ENCODE measurements at regions of chr16 and their contacts with region 1.

Region 1: GRCh38 chr16:19086322-19087199 is 19.1 kb downstream of the COQ7 start:
- DNase-seq: peak; percentile 91 to 97
- ATAC-seq: peak; percentile 98 to 100
- H3K4me3 ChIP-seq: peak overlapping the region; percentile 45
- H3K27ac ChIP-seq: peak overlapping the region; percentile 75 to 86
- H3K4me1 ChIP-seq: peaks cover 6% of the 10 kb centered on the region; the same call in 2 of the 3 replicates
- CTCF ChIP-seq: peak; percentile 99
- EP300 ChIP-seq: no peak
- POLR2A ChIP-seq: peak; percentile 71
- RAD21 ChIP-seq: peak; percentile 98 to 100

Region 2: GRCh38 chr16:19046062-19046461 is 40.5 kb before region 1 on chr16:
- CTCF ChIA-PET with region 1: no interaction called
- POLR2A ChIA-PET with region 1: no interaction called
- DNase-seq: no peak
- ATAC-seq: no peak
- H3K4me3 ChIP-seq: no peak overlapping the region
- H3K27ac ChIP-seq: no peak overlapping the region
- H3K4me1 ChIP-seq: no peaks in the 10 kb centered on the region
- CTCF ChIP-seq: no peak
- EP300 ChIP-seq: no peak
- POLR2A ChIP-seq: no peak
- RAD21 ChIP-seq: no peak

Region 3: GRCh38 chr16:19067349-19068236 is 19.0 kb before region 1 on chr16 and contains the start of gene COQ7:
- CTCF ChIA-PET with region 1: interaction called, 33 read pairs
- POLR2A ChIA-PET with region 1: no interaction called
- DNase-seq: peak; percentile 95 to 100
- ATAC-seq: peak; percentile 93
- H3K4me3 ChIP-seq: peak within 1 kb of the TSS; percentile 63
- H3K27ac ChIP-seq: peak within 1 kb of the TSS; percentile 95 to 99
- H3K4me1 ChIP-seq: peaks cover 12% of the 10 kb centered on the region; the same call in 2 of the 3 replicates
- CTCF ChIP-seq: no peak
- EP300 ChIP-seq: no peak
- POLR2A ChIP-seq: peak; percentile 17; the same call in 1 of the 2 replicates
- RAD21 ChIP-seq: no peak
- polyA plus RNA-seq, gene COQ7: 17.9 and 23.8 TPM in 2 replicates

Region 4: GRCh38 chr16:19118938-19119431 is 32.4 kb after region 1 on chr16:
- CTCF ChIA-PET with region 1: interaction called, 114 read pairs
- POLR2A ChIA-PET with region 1: interaction called, 11 read pairs
- DNase-seq: peak; percentile 71 to 82
- ATAC-seq: peak in 1 of 2 experiments; percentile 45; a peak in 3 of 6 replicates
- H3K4me3 ChIP-seq: peak overlapping the region; percentile 24
- H3K27ac ChIP-seq: peak overlapping the region; percentile 90
- H3K4me1 ChIP-seq: peaks cover 91% of the 10 kb centered on the region
- CTCF ChIP-seq: no peak
- EP300 ChIP-seq: no peak
- POLR2A ChIP-seq: no peak
- RAD21 ChIP-seq: 0 out of 5 replicates have a peak, but pooled peaks of 1 of the 2 experiments have one; percentile 4

Region 5: DNA sequence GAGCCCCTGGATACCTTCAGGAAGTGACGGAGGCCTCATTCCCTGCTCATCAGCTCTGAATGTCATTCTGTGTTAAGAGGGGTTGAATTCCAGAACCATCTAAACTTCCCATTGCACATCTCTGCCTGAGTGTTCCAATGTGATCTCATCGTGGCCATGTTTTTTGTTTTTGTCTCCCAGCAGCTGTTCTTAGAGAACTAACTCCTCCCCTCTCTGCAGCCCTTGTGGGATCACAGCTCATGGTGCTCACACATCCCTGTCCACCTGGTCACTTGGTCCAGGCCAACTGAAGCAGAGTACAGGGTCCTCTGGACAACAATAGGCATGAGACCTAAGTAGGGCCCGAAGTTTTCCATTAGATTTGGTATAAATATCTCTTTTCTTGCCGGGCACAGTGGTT is 75.5 kb after region 1 on chr16:
- CTCF ChIA-PET with region 1: interaction called, 23 read pairs
- POLR2A ChIA-PET with region 1: no interaction called
- DNase-seq: peak in 1 of 2 experiments; percentile 16
- ATAC-seq: 0 out of 6 replicates have a peak, but pooled peaks of 1 of the 2 experiments have one; percentile 41
- H3K4me3 ChIP-seq: no peak overlapping the region
- H3K27ac ChIP-seq: no peak overlapping the region
- H3K4me1 ChIP-seq: peaks cover 17% of the 10 kb centered on the region
- CTCF ChIP-seq: no peak
- EP300 ChIP-seq: no peak
- POLR2A ChIP-seq: no peak
- RAD21 ChIP-seq: no peak

Region 6: GRCh38 chr16:19356024-19356952 is 269.7 kb after region 1 on chr16:
- CTCF ChIA-PET with region 1: interaction called, 11 read pairs
- POLR2A ChIA-PET with region 1: no interaction called
- DNase-seq: no peak
- ATAC-seq: no peak
- H3K4me3 ChIP-seq: no peak overlapping the region
- H3K27ac ChIP-seq: no peak overlapping the region
- H3K4me1 ChIP-seq: no peaks in the 10 kb centered on the region
- CTCF ChIP-seq: no peak
- EP300 ChIP-seq: no peak
- POLR2A ChIP-seq: no peak
- RAD21 ChIP-seq: no peak

Region 7: GRCh38 chr16:19382887-19383816 is 296.6 kb after region 1 on chr16:
- CTCF ChIA-PET with region 1: interaction called, 151 read pairs
- POLR2A ChIA-PET with region 1: no interaction called
- DNase-seq: no peak
- ATAC-seq: peak in 1 of 2 experiments; percentile 34; a peak in 3 of 6 replicates
- H3K4me3 ChIP-seq: no peak overlapping the region
- H3K27ac ChIP-seq: peak overlapping the region in 1 of 2 experiments; percentile 53; a peak in 3 of 6 replicates
- H3K4me1 ChIP-seq: peaks cover 19% of the 10 kb centered on the region
- CTCF ChIP-seq: no peak
- EP300 ChIP-seq: no peak
- POLR2A ChIP-seq: no peak
- RAD21 ChIP-seq: no peak

Region 8: GRCh38 chr16:19521471-19522396 is 435.2 kb after region 1 on chr16 and contains the start of gene GDE1:
- CTCF ChIA-PET with region 1: interaction called, 15 read pairs
- POLR2A ChIA-PET with region 1: no interaction called
- DNase-seq: peak; percentile 90 to 94
- ATAC-seq: peak; percentile 88 to 91
- H3K4me3 ChIP-seq: peak within 1 kb of the TSS; percentile 74
- H3K27ac ChIP-seq: peak within 1 kb of the TSS; percentile 85 to 96
- H3K4me1 ChIP-seq: peaks cover 64% of the 10 kb centered on the region
- CTCF ChIP-seq: no peak
- EP300 ChIP-seq: no peak
- POLR2A ChIP-seq: peak; percentile 87
- RAD21 ChIP-seq: no peak
- polyA plus RNA-seq, gene GDE1: 81.6 and 85.2 TPM in 2 replicates